ENCODE measurements at regions of chr17 and their contacts with region 1.

Region 1: DNA sequence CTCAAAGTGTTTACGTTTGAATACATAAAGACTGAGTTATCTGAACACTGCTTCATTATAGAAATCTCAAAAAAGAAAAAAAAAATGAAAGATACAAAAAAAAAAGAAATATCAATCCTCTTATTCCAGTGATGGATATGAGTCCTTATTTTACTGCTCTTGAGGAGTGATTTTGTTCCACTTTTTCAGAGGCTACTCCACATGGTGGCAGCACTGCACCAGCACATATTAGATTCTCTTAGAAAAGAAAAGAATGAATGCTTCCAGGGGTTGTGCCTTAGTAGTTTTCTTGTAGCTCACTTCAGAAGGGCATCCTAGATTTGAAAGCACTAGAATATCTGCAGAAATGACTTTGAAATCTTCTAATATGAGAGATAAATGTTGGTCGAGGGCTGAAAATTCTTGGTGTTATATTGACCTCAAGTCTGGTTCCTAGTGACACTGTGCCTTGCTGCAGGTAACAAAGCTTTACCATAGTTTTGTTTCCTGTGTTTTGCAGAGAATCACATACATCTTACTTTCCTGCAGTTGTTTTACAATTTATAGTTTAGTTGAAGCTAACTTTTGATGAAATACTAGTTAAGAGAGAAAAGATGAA is 25.9 kb downstream of the AP2B1 start:
- DNase-seq: peak; percentile 52
- H3K4me3 ChIP-seq: no peak overlapping the region; a peak in 1 of 4 replicates
- H3K27ac ChIP-seq: no peak overlapping the region
- H3K4me1 ChIP-seq: no peaks in the 10 kb centered on the region
- H3K27me3 ChIP-seq: no peaks in the 10 kb centered on the region
- CTCF ChIP-seq: peak; percentile 85
- EP300 ChIP-seq: no peak
- RAD21 ChIP-seq: peak; percentile 75

Region 2: GRCh38 chr17:35476283-35476820 is 136.7 kb before region 1 on chr17:
- CTCF ChIA-PET with region 1: no interaction called
- POLR2A ChIA-PET with region 1: no interaction called
- DNase-seq: no peak
- H3K4me3 ChIP-seq: no peak overlapping the region
- H3K27ac ChIP-seq: no peak overlapping the region
- H3K4me1 ChIP-seq: no peaks in the 10 kb centered on the region
- H3K27me3 ChIP-seq: peaks cover 27% of the 10 kb centered on the region
- CTCF ChIP-seq: no peak
- EP300 ChIP-seq: no peak
- RAD21 ChIP-seq: no peak

Region 3: DNA sequence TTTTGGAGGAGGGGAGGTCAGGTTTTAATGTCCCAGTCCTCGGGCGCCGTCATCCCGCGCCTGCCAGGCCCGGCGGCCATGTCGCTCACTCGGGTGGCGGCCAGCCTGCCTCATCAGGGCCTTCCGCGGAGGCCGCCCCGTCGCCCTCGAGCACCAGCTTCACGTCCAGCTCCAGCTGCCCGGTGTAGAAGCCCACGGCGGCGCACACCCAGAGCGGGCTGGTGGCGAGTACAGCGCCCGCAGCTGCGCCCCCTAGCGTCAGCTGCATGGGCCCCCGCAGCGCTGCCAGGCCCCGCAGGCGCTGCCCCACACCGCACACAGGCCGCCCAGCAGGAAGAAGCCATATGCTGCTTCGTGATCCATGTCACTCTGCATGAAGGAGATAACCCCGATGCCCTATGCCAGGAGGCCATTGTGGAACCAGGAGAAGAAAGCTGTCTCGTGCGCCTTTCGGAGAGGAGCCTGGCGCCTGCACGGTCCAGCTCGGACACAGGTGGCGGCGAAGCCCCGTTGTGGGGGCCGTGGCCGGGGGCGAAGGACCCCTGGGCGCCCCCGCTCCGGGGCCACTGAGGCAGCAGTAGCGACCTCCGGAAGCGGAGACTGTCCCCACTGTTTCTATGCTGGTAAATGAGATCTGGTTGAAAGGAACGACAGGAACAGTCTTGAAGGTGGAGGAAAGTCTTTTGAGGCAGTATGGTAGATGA is 16.3 kb before region 1 on chr17:
- CTCF ChIA-PET with region 1: interaction called, 36 read pairs
- POLR2A ChIA-PET with region 1: no interaction called
- DNase-seq: peak; percentile 26
- H3K4me3 ChIP-seq: no peak overlapping the region
- H3K27ac ChIP-seq: no peak overlapping the region
- H3K4me1 ChIP-seq: no peaks in the 10 kb centered on the region
- H3K27me3 ChIP-seq: no peaks in the 10 kb centered on the region
- CTCF ChIP-seq: peak; percentile 18; the same call in 1 of the 2 replicates
- EP300 ChIP-seq: no peak
- RAD21 ChIP-seq: no peak

Region 4: DNA sequence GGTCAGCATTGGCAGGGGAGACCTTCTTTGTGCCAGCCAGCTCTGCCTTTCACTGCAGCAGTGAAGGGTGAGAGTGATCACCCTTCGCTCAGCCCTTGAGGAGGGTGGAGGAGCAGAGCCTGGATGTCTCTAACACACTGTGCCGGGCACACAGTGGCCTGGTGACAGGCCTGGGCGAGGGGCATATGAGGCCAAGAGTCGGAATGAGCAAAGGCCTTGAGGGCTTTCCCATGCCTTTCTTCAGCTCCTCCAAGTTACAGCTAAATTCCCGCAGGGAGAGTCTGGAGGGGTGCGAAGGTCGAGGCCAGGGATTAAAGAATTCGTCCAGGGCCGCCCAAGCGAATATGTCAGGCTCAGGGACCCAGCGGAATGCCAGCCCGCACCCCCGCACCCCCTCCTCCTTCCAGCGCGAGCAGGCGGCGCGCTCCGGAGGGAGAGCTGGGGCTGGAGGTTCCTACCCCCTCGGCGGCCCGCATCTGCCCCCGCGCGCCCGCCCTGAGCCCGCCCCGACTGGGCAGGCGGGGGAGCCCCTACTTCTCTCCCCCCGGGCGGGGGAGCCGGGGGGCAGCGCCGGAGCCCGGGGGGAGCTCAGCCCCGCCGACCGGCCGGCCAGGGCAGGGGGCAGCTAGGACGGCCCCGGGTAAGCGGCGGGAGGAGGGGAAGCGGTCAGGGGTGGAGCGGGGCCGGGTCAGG is 118.4 kb after region 1 on chr17 and contains the start of gene RASL10B:
- CTCF ChIA-PET with region 1: interaction called, 18 read pairs
- POLR2A ChIA-PET with region 1: no interaction called
- DNase-seq: peak; percentile 93
- H3K4me3 ChIP-seq: peak within 1 kb of the TSS; percentile 63 to 65
- H3K27ac ChIP-seq: peak within 1 kb of the TSS in 1 of 2 experiments; percentile 9; a peak in 1 of 4 replicates
- H3K4me1 ChIP-seq: peaks cover 13 to 20% of the 10 kb centered on the region in 2 experiments; a peak in 3 of 4 replicates
- H3K27me3 ChIP-seq: no peaks in the 10 kb centered on the region
- CTCF ChIP-seq: no peak
- EP300 ChIP-seq: no peak
- RAD21 ChIP-seq: no peak
- polyA plus RNA-seq, gene RASL10B: 4.2 and 4.3 TPM in 2 replicates

Region 5: DNA sequence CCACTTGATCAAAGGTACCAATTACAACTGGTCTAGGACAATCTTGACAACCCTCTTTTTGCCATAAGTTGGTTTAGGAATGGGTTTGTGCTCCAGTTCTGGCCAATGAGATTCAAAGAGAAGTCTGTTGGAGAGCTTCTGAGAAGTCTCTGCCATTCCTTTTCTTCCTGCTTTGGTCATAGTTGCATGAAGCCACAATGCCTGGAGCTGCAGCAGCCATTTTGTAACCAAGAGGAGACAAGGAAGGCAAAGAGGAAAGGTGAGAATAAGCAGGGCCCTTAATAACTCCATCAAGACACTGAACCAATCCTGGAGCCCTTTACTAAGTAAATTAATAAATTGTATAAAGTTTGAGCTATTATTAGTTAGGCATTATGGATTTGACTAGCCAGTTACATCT is 144.2 kb after region 1 on chr17:
- CTCF ChIA-PET with region 1: interaction called, 21 read pairs
- POLR2A ChIA-PET with region 1: no interaction called
- DNase-seq: no peak
- H3K4me3 ChIP-seq: no peak overlapping the region
- H3K27ac ChIP-seq: no peak overlapping the region
- H3K4me1 ChIP-seq: peaks cover 0 to 10% of the 10 kb centered on the region in 2 experiments; a peak in 1 of 4 replicates
- H3K27me3 ChIP-seq: no peaks in the 10 kb centered on the region
- CTCF ChIP-seq: no peak
- EP300 ChIP-seq: no peak
- RAD21 ChIP-seq: no peak